Activated CD4-positive, alpha-beta T cell treated with anti-CD3 and anti-CD28 coated beads for 36 hours (primary cell): ENCODE measurements at regions of chr19 and their contacts with region 1.

Region 1: GRCh38 chr19:28878862-28879566 is 333.9 kb downstream of the UQCRFS1 start:
- DNase-seq: peak; percentile 81
- ATAC-seq: peak; percentile 47
- H3K4me3 Mint-ChIP-seq: no peak overlapping the region
- H3K27ac Mint-ChIP-seq: no peak overlapping the region
- H3K4me1 Mint-ChIP-seq: no peaks in the 10 kb centered on the region
- H3K27me3 Mint-ChIP-seq: peaks cover 2% of the 10 kb centered on the region

Region 2: DNA sequence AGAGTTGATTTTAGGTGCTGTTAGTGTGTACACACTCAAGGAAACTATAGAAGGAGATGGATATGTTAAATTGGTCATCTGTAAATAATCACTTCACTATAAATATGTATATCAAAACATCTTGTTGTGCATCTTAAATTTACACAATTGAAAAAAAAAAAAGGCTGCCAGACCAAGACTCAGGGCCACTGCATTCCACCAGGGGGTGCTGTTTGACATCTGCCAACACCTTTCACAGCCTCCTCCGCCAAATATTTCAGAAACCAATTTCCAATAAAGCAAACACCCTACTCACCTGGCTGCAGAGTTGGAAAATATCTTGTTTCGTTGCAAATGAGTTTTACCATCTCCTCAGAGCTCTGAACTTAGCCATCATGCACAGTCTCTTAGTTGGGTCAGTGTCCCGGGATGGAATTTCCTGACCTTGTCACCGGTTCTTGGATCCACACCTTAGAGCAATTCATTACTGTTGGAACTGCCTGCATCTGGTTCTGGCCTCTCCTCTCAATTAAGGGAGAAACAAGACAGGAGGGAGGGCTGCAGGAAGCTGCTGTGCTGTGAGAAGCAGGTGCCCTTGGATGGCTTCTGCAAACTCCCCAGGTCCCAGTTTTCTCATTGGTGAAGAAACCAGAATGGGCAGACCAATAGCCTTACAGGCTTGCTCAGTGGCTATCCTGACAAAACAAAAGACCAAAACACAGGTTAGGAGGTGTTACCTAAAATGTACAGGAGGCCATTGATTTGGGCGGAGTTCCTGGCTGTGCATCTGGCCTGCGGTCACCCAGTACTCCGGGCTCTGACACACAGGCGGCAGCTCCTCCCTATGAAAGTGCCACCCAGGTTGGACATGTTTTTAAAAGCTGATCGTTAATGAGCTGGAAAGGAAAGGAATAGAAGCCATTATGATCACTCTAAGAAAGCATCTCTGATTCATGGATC is 412.6 kb before region 1 on chr19:
- CTCF ChIA-PET with region 1: interaction called, 7 read pairs
- POLR2A ChIA-PET with region 1: no interaction called
- intact Hi-C with region 1: loop called (anchors 1 to 2 kb)
- DNase-seq: peak; percentile 84
- ATAC-seq: no peak
- H3K4me3 Mint-ChIP-seq: no peak overlapping the region
- H3K27ac Mint-ChIP-seq: no peak overlapping the region
- H3K4me1 Mint-ChIP-seq: peaks cover 23% of the 10 kb centered on the region
- H3K27me3 Mint-ChIP-seq: peaks cover 3% of the 10 kb centered on the region

Region 3: DNA sequence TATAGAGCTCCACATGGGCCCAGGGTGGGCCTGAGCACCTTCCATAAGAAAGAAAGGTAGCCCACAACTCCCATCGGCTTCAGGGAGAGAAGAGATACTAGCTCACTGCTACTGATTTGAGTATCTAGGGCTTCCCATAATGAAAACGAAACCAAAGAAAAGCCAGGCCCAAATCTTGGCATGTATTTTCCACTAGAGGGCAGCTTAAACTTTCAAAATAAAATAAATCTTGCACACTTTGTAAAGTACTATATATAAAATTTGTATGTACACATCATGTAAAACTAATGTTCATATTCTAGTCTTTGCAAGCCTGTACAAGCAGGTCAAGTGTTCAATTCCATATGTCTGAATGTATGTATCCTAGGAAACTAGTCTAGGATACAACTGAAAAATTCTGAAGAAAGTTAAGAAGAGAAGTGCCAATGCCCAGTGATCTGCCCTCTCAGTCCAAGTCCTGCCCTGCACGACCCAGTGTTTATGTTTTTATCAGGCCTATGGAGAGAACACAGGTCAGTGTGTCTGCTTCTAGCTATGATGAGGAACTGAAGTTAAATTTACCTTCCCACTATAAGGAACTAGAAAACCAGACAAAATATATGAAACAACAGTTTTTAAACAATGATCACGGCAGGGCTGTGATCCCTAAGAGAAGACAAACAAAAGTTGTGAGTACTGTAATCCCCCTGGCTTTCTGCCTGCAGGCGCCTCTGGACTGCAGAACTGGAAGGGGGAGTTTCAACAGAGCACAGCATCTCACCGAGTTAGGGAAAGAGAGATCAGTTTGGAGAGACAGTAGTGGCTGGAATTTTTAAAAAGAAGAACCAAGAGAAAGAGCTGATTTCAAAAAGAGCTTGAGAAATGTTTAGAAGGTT is 141.8 kb before region 1 on chr19:
- CTCF ChIA-PET with region 1: interaction called, 23 read pairs
- POLR2A ChIA-PET with region 1: no interaction called
- intact Hi-C with region 1: loop called (anchors 1 kb)
- DNase-seq: peak; percentile 25
- ATAC-seq: peak; percentile 75
- H3K4me3 Mint-ChIP-seq: no peak overlapping the region
- H3K27ac Mint-ChIP-seq: no peak overlapping the region
- H3K4me1 Mint-ChIP-seq: peaks cover 4% of the 10 kb centered on the region
- H3K27me3 Mint-ChIP-seq: peaks cover 2% of the 10 kb centered on the region